Activated naive CD4-positive, alpha-beta T cell treated with anti-CD3 and anti-CD28 coated beads for 36 hours (primary cell): ENCODE measurements at regions of chr1 and their contacts with region 1.

Region 1: DNA sequence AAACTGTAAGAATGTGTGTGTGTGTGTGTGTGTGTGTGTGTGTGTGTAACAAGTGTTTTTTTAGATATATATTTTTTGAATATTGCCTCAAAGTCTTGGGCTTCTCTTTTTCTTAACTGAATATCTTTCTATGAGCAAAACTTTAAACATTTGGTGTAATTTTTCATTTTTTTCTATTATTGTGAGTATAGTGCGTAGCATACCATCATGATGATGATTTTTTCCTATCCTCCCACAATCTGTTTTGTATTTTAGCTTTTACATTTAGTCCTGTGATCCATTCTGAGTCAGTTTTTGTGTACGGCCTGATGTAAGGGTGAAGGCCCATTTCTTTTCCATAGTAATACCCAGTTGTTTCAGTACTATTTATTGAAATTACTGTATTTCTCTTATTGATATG is 680.6 kb downstream of the TTLL7 start:
- DNase-seq: no peak
- H3K4me3 Mint-ChIP-seq: no peak overlapping the region
- H3K27ac Mint-ChIP-seq: no peak overlapping the region
- H3K4me1 Mint-ChIP-seq: no peaks in the 10 kb centered on the region
- H3K27me3 Mint-ChIP-seq: no peaks in the 10 kb centered on the region

Region 2: DNA sequence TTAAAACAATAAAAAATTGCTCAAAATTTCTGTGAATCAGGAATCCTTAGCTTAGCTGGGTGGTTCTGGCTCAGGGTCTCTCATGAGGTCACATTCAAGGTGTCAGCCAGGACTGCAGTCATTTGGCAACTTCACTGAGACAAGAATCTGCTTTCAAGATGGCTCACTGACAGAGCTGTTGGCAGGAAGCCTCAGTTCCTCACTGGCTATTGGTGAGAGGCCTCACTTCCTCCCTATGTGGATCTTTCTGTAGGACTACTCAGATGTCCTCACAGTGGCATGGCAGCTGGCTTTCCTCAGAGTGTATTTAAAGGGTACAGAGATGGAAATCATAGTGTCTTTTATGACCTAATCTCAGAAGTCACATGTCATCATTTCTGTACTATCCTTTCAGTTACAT is 731.9 kb before region 1 on chr1:
- CTCF ChIA-PET with region 1: no interaction called
- intact Hi-C with region 1: no loop called
- DNase-seq: no peak
- H3K4me3 Mint-ChIP-seq: no peak overlapping the region
- H3K27ac Mint-ChIP-seq: no peak overlapping the region
- H3K4me1 Mint-ChIP-seq: no peaks in the 10 kb centered on the region
- H3K27me3 Mint-ChIP-seq: no peaks in the 10 kb centered on the region

Region 3: DNA sequence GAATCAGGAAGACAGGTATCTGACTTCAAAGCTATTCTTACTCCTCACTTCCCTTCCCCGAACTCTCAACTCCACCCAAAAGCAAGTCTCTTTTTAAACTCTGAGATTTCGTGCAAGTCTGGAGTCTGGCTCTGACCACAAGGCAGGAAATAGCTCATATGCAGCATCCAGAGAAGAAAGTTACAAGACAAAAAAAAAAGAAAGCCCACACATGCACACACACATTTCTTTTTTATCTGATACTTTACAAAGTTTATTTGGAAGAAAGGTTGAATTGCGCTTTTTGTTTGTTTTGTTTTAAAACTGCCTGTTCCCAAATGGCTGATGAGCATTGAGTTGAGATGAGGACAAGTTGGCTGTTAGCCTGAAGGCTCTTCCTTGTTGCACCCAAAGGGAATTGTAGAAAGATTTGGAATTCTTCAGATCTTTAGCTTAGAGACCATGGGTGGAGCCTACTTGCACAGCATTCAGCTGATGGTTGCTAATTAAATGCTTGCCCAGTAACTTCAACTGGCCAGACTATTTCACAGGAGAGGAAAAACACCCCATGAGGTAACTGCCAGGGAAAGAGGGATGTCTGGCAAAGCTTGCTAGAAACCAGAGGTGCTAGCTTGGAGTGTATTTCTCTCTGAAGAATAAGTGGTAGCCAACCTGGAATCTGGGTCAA is 190.3 kb after region 1 on chr1:
- CTCF ChIA-PET with region 1: no interaction called
- intact Hi-C with region 1: loop called (anchors 10 kb)
- DNase-seq: peak; percentile 68
- H3K4me3 Mint-ChIP-seq: peak overlapping the region; percentile 46
- H3K27ac Mint-ChIP-seq: peak overlapping the region; percentile 91
- H3K4me1 Mint-ChIP-seq: peaks cover 46% of the 10 kb centered on the region
- H3K27me3 Mint-ChIP-seq: no peaks in the 10 kb centered on the region

Region 4: DNA sequence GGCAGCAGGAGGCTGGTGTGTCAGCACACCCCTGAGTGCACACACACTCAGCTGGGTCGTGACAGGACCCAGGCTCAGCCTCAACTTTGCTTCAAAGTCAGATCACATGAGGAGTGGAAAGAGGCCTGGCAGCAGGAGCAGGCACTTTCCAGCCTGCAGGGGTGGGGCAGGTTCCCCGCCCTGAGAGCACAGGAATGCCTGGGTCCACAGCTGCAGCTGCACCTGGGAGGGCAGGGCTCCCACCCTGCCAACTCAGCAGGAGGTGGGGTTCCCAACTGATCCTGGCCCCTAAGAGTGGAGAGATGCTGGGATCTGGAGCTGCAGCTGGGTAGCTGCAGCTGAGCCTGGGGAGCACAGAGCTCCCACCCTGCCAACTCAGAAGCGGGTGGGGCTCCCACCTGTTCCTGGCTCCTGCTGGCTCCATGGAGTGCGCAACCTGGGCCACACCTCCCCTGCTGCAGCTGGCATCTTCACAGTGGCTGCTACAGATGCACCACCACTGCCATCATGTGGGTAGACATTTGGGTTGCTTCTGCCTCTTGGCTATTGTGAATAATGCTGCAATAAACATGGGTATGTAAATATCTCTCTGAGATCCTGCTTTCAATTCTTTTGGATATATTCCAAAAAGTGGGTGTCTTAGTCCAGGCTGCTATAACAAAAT is 265.1 kb after region 1 on chr1:
- CTCF ChIA-PET with region 1: no interaction called
- intact Hi-C with region 1: loop called (anchors 5 kb)
- DNase-seq: peak; percentile 57
- H3K4me3 Mint-ChIP-seq: no peak overlapping the region
- H3K27ac Mint-ChIP-seq: no peak overlapping the region
- H3K4me1 Mint-ChIP-seq: peaks cover 7% of the 10 kb centered on the region
- H3K27me3 Mint-ChIP-seq: no peaks in the 10 kb centered on the region

Region 5: GRCh38 chr1:83978056-83978455 is 659.7 kb after region 1 on chr1:
- CTCF ChIA-PET with region 1: no interaction called
- intact Hi-C with region 1: no loop called
- DNase-seq: no peak
- H3K4me3 Mint-ChIP-seq: no peak overlapping the region
- H3K27ac Mint-ChIP-seq: no peak overlapping the region
- H3K4me1 Mint-ChIP-seq: no peaks in the 10 kb centered on the region
- H3K27me3 Mint-ChIP-seq: peaks cover 4% of the 10 kb centered on the region